Left colon (tissue), 2 donors: ENCODE measurements at regions of chr17 and their contacts with region 1.

Region 1: GRCh38 chr17:16521070-16521727 is 29.2 kb upstream of the LRRC75A start:
- DNase-seq: peak; percentile 65 to 78
- ATAC-seq: peak; percentile 98

Region 2: DNA sequence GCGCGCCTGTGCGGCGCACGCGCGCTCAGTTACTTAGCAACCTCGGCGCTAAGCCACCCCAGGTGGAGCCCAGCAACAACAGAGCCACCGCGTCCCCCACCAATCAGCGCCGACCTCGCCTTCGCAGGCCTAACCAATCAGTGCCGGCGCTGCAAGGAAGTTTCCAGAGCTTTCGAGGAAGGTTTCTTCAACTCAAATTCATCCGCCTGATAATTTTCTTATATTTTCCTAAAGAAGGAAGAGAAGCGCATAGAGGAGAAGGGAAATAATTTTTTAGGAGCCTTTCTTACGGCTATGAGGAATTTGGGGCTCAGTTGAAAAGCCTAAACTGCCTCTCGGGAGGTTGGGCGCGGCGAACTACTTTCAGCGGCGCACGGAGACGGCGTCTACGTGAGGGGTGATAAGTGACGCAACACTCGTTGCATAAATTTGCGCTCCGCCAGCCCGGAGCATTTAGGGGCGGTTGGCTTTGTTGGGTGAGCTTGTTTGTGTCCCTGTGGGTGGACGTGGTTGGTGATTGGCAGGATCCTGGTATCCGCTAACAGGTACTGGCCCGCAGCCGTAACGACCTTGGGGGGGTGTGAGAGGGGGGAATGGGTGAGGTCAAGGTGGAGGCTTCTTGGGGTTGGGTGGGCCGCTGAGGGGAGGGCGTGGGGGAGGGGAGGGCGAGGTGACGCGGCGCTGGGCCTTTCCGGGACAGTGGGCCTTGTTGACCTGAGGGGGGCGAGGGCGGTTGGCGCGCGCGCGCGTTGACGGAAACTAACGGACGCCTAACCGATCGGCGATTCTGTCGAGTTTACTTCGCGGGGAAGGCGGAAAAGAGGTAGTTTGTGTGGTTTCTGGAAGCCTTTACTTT is 140.3 kb before region 1 on chr17 and contains the start of gene UBB:
- intact Hi-C with region 1: loop called in 1 of 2 experiments (anchors 10 kb)
- DNase-seq: peak; percentile 95 to 98
- ATAC-seq: peak; percentile 92
- total RNA-seq, gene UBB: 1,117 to 1,930 TPM

Region 3: DNA sequence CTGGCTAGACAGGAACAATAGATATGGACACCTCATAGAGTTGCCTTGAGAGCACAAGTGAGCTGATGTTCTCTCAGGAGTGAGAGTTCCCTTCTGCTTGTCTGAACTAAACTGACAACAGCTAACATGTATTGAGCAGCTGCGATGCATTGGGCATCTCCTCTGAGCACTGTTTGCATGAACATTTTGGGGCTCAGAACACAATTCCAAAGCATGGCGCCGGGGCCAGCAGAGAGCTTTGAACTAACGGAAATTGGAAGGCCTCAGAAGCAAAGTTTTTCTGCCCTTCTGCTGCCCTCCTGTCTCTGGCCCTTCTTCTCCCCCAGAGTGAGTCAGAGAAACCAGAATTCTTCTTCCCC is 67.7 kb before region 1 on chr17:
- intact Hi-C with region 1: loop called (anchors 2 to 5 kb)
- DNase-seq: no peak
- ATAC-seq: no peak

Region 4: DNA sequence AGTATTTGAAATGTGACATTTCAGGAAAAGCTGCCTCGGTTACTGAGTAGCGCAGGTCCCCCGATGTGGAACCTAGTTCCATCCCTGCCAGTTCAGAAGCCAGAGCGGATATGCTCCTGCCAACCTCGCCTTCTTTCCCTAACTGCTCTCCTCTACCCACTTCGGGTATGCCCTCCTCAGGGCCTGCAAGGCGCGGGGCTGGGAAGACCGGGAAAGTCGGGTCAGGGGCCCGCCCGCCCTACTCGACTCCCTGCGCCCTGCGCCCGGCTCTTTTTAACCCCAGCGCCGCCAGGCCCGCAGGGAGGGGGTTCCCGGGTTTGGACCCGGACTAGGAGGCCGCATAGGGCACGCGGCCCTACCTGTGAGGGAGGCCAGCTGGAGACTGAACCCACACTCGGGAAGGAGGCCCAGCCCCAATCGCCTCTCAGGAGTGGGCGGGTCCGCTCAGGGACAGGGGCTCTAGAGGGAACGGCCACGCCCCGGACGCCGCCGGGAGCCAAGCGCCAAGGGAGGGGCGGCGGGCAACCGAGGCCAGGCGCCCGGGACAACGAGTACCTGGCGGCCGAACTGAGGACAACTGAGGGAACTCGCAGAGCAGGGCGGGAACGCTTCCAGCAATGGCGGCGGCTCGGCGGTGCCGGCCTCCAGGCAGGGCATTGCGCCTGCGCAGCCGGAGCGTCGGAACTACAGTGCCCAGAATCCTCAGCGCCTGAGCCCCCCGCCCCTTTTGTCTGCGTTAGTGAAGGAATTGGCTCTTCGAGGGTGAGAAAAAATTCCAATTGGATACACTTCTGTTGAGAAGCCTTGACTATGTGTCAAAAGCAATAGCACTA is 132.2 kb after region 1 on chr17 and contains the start of gene ZNF624:
- intact Hi-C with region 1: no loop called
- DNase-seq: peak; percentile 96
- ATAC-seq: peak; percentile 95
- total RNA-seq, gene ZNF624: 3.7 to 6.1 TPM